IMR-90 (cell line): ENCODE measurements at regions of chr1 and their contacts with region 1.

Region 1: GRCh38 chr1:108559215-108560186 is at the start of gene EEIG2:
- DNase-seq: peak; percentile 82
- ATAC-seq: peak; percentile 99
- H3K4me3 ChIP-seq: peak within 1 kb of the TSS; percentile 82
- H3K27ac ChIP-seq: peak within 1 kb of the TSS; percentile 39
- H3K4me1 ChIP-seq: no peaks in the 10 kb centered on the region; the same call in 1 of the 2 replicates
- H3K27me3 ChIP-seq: peaks cover 3% of the 10 kb centered on the region
- CTCF ChIP-seq: peak; percentile 88
- POLR2A ChIP-seq: no peak
- RAD21 ChIP-seq: peak; percentile 48
- total RNA-seq, gene EEIG2: 4.8 and 5.8 TPM in 2 replicates

Region 2: GRCh38 chr1:108067884-108068538 is 491.5 kb before region 1 on chr1:
- CTCF ChIA-PET with region 1: no interaction called
- POLR2A ChIA-PET with region 1: no interaction called
- dilution Hi-C with region 1: no loop called
- in situ Hi-C with region 1: no loop called
- intact Hi-C with region 1: no loop called
- DNase-seq: no peak
- ATAC-seq: no peak
- H3K4me3 ChIP-seq: no peak overlapping the region
- H3K27ac ChIP-seq: no peak overlapping the region
- H3K4me1 ChIP-seq: no peaks in the 10 kb centered on the region
- H3K27me3 ChIP-seq: no peaks in the 10 kb centered on the region
- CTCF ChIP-seq: no peak
- POLR2A ChIP-seq: no peak
- RAD21 ChIP-seq: no peak

Region 3: GRCh38 chr1:108512239-108512981 is 47.1 kb before region 1 on chr1:
- CTCF ChIA-PET with region 1: no interaction called
- POLR2A ChIA-PET with region 1: no interaction called
- dilution Hi-C with region 1: no loop called
- in situ Hi-C with region 1: no loop called
- intact Hi-C with region 1: loop called (anchors 2 kb)
- DNase-seq: peak; percentile 50
- ATAC-seq: peak; percentile 82
- H3K4me3 ChIP-seq: no peak overlapping the region
- H3K27ac ChIP-seq: no peak overlapping the region
- H3K4me1 ChIP-seq: no peaks in the 10 kb centered on the region
- H3K27me3 ChIP-seq: peaks cover 9% of the 10 kb centered on the region
- CTCF ChIP-seq: peak; percentile 94
- POLR2A ChIP-seq: no peak
- RAD21 ChIP-seq: peak; percentile 93

Region 4: GRCh38 chr1:108570128-108570527 is 10.6 kb after region 1 on chr1:
- CTCF ChIA-PET with region 1: interaction called, 8 read pairs
- POLR2A ChIA-PET with region 1: interaction called, 16 read pairs
- dilution Hi-C with region 1: no loop called
- in situ Hi-C with region 1: no loop called
- intact Hi-C with region 1: no loop called
- DNase-seq: peak; percentile 6
- ATAC-seq: peak; percentile 81
- H3K4me3 ChIP-seq: no peak overlapping the region
- H3K27ac ChIP-seq: no peak overlapping the region
- H3K4me1 ChIP-seq: no peaks in the 10 kb centered on the region
- H3K27me3 ChIP-seq: no peaks in the 10 kb centered on the region
- CTCF ChIP-seq: peak; percentile 34
- POLR2A ChIP-seq: no peak
- RAD21 ChIP-seq: peak; percentile 30; the same call in 1 of the 2 replicates

Region 5: GRCh38 chr1:108595507-108595906 is 36.0 kb after region 1 on chr1:
- CTCF ChIA-PET with region 1: no interaction called
- POLR2A ChIA-PET with region 1: no interaction called
- dilution Hi-C with region 1: no loop called
- in situ Hi-C with region 1: no loop called
- intact Hi-C with region 1: loop called (anchors 5 kb)
- DNase-seq: peak; percentile 32
- ATAC-seq: no peak
- H3K4me3 ChIP-seq: no peak overlapping the region
- H3K27ac ChIP-seq: no peak overlapping the region
- H3K4me1 ChIP-seq: peaks cover 4% of the 10 kb centered on the region
- H3K27me3 ChIP-seq: no peaks in the 10 kb centered on the region
- CTCF ChIP-seq: no peak
- POLR2A ChIP-seq: no peak
- RAD21 ChIP-seq: no peak

Region 6: GRCh38 chr1:108627951-108628350 is 68.5 kb after region 1 on chr1:
- CTCF ChIA-PET with region 1: interaction called, 12 read pairs
- POLR2A ChIA-PET with region 1: no interaction called
- dilution Hi-C with region 1: no loop called
- in situ Hi-C with region 1: no loop called
- intact Hi-C with region 1: no loop called
- DNase-seq: no peak
- ATAC-seq: no peak
- H3K4me3 ChIP-seq: no peak overlapping the region
- H3K27ac ChIP-seq: no peak overlapping the region
- H3K4me1 ChIP-seq: no peaks in the 10 kb centered on the region
- H3K27me3 ChIP-seq: no peaks in the 10 kb centered on the region
- CTCF ChIP-seq: no peak
- POLR2A ChIP-seq: no peak
- RAD21 ChIP-seq: no peak

Region 7: DNA sequence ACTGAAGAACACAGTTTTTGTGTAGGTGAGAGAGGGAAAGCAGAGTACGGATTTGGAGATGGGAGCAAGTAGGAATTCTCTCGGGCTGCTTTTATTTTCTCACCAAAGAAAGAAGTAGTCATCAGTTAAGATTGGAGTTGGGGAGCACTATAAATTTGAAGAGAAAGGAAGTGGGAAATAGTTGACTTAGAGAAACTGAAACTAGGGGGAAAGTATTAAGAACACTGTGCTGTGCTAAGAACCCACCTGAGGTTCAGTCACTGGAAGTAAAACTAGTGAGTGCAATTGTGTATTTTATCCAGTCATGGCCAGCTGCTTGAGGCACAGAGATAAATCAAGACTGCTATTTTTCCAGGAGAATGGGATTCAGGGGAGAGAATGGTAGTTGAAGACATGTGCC is 366.4 kb after region 1 on chr1:
- CTCF ChIA-PET with region 1: no interaction called
- POLR2A ChIA-PET with region 1: no interaction called
- dilution Hi-C with region 1: no loop called
- in situ Hi-C with region 1: no loop called
- intact Hi-C with region 1: no loop called
- DNase-seq: no peak
- ATAC-seq: no peak
- H3K4me3 ChIP-seq: no peak overlapping the region
- H3K27ac ChIP-seq: no peak overlapping the region
- H3K4me1 ChIP-seq: no peaks in the 10 kb centered on the region
- H3K27me3 ChIP-seq: no peaks in the 10 kb centered on the region
- CTCF ChIP-seq: no peak
- POLR2A ChIP-seq: no peak
- RAD21 ChIP-seq: no peak

Region 8: DNA sequence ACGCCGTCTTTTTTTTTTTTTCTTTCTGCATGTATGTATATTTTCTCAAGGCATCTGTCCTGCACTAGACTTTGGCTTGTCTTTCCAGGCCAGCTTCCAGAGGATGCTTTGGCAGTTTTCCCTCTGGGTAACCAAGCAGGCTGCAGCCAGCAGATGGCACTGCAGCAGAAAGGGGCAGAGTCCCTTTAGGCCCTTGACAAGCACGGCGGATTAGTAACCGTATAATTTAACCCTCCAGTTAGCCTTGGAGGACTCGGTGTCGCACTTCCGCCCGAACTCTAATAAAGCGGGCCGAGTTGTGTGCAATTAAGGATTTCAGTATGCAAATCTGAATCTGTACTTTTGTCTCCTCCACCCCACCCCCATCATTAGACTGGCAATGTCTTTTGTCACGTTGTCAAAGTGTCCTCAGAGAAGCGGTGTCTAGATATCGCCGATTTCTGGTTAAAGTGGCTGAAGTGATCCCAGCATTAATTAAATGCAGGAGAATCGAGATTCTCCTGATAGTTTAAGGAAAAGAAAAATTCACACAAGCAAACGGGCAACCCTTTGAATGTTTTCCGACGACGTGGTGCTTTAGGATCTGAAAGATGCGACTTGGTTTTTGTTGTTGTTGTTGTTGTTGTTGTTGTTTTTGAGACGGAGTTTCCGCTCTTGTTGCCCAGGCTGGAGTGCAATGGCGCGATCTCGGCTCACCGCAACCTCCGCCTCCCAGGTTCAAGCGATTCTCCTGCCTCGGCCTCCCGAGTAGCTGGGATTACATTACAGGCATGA is 529.9 kb after region 1 on chr1:
- CTCF ChIA-PET with region 1: no interaction called
- POLR2A ChIA-PET with region 1: no interaction called
- dilution Hi-C with region 1: no loop called
- in situ Hi-C with region 1: no loop called
- intact Hi-C with region 1: no loop called
- DNase-seq: peak; percentile 71
- ATAC-seq: no peak
- H3K4me3 ChIP-seq: no peak overlapping the region
- H3K27ac ChIP-seq: no peak overlapping the region
- H3K4me1 ChIP-seq: peaks cover 5% of the 10 kb centered on the region; the same call in 1 of the 2 replicates
- H3K27me3 ChIP-seq: no peaks in the 10 kb centered on the region
- CTCF ChIP-seq: peak; percentile 60
- POLR2A ChIP-seq: no peak
- RAD21 ChIP-seq: peak; percentile 44

Region 9: GRCh38 chr1:109229531-109230127 is 670.1 kb after region 1 on chr1:
- CTCF ChIA-PET with region 1: no interaction called
- POLR2A ChIA-PET with region 1: no interaction called
- dilution Hi-C with region 1: no loop called
- in situ Hi-C with region 1: no loop called
- intact Hi-C with region 1: no loop called
- DNase-seq: no peak
- ATAC-seq: no peak
- H3K4me3 ChIP-seq: no peak overlapping the region
- H3K27ac ChIP-seq: no peak overlapping the region; the same call in 1 of the 2 replicates
- H3K4me1 ChIP-seq: peaks cover 17% of the 10 kb centered on the region
- H3K27me3 ChIP-seq: no peaks in the 10 kb centered on the region
- CTCF ChIP-seq: no peak
- POLR2A ChIP-seq: no peak
- RAD21 ChIP-seq: no peak